ENCODE measurements at regions of chr2 and their contacts with region 1.

Region 1: GRCh38 chr2:61888267-61889055 is at the start of gene CCT4:
- DNase-seq: peak; percentile 93
- ATAC-seq: peak; percentile 79
- H3K4me3 Mint-ChIP-seq: peak within 1 kb of the TSS; percentile 99
- H3K27ac Mint-ChIP-seq: peak within 1 kb of the TSS; percentile 99
- H3K4me1 Mint-ChIP-seq: peaks cover 31% of the 10 kb centered on the region
- H3K27me3 Mint-ChIP-seq: no peaks in the 10 kb centered on the region
- total RNA-seq, gene CCT4: 255 to 373 TPM

Region 2: GRCh38 chr2:61854474-61855182 is 33.8 kb before region 1 on chr2:
- CTCF ChIA-PET with region 1: no interaction called
- POLR2A ChIA-PET with region 1: no interaction called
- intact Hi-C with region 1: loop called (anchors 1 kb)
- DNase-seq: peak; percentile 93
- ATAC-seq: peak; percentile 94
- H3K4me3 Mint-ChIP-seq: peak overlapping the region; percentile 99
- H3K27ac Mint-ChIP-seq: peak overlapping the region; percentile 94
- H3K4me1 Mint-ChIP-seq: peaks cover 20% of the 10 kb centered on the region
- H3K27me3 Mint-ChIP-seq: no peaks in the 10 kb centered on the region

Region 3: DNA sequence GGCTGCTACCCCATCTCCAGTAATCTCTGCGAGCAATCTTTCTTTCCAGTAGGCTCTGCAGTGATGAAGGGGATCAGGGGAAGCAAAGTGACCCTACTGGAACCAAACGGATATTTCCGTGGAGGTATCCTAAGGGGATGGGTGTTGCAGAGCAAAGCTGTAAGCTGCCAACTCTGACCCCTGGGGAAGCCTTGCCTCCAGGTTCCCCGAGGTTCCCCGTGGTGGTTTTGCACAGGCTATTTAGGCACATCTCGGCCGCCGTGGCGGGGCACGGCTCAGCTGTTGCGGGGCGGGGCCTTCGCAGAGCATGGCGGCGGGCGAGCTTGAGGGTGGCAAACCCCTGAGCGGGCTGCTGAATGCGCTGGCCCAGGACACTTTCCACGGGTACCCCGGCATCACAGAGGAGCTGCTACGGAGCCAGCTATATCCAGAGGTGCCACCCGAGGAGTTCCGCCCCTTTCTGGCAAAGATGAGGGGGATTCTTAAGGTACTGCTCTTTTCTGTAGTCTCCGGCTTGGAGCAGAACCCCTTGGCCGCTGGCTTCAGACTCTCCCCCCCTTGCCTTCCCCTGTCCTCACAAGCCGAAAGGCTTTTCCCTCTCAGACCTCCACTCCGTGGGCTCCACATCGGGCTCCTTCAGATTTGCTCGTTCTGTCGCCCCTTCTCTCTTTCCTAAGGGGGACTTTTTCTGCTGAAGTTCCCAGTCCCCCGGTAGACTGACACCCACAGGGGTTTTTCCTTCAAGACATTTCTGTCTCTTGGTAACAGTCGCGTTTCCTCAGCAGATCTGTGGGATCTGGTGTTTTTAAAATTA is 17.1 kb after region 1 on chr2 and contains the start of gene COMMD1:
- CTCF ChIA-PET with region 1: no interaction called
- POLR2A ChIA-PET with region 1: interaction called, 3 read pairs
- intact Hi-C with region 1: loop called (anchors 1 to 2 kb)
- DNase-seq: peak; percentile 93
- ATAC-seq: peak; percentile 99
- H3K4me3 Mint-ChIP-seq: peak within 1 kb of the TSS; percentile 96
- H3K27ac Mint-ChIP-seq: peak within 1 kb of the TSS; percentile 80
- H3K4me1 Mint-ChIP-seq: peaks cover 9% of the 10 kb centered on the region
- H3K27me3 Mint-ChIP-seq: no peaks in the 10 kb centered on the region
- total RNA-seq, gene COMMD1: 29.3 to 36.1 TPM

Measured in activated CD4-positive, alpha-beta T cell treated with anti-CD3 and anti-CD28 coated beads for 36 hours (primary cell).